GM10248 (cell line): ENCODE measurements at regions of chr17 and their contacts with region 1.

Region 1: DNA sequence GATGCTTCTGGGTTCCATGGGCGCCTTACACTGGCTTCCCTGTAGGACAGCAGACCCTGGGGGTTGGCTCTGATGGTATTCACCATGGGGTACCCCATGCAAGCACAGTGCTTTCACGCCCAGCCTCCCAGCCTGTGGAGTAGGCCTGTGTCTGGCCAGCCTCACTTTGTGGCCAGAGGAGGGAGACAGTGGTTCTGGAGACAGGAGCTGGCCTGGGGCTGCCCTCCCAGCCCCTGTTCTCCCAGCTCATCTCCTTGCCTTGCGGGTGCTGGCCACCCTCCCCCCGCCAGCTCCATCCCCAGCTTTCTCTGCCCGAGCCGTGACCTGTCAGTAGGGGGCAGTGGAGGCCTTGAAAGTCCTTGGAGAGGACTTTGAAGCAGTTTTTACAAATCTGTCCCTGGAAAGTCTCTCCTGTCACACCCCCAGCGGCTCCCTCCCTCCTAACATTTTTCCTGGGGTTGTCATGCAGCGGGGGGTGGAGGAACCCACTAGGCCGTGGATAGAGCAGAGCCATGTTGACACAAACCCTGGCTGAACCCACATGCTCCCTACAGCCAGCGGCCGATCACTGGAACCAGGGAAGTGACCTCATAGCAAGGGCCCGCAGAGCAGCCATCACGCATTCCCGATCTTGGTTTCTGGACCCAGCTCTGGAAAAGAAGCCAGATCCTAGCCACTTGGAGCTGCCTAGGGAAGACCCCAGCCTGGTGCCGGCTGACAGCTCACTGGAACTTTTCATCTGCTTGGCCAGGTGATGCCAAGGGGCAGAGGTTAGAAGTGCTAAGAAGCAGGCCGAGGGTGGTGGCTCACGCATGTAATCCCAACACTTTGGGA is 289.4 kb downstream of the SEC14L1 start:
- DNase-seq: peak; percentile 80
- CTCF ChIP-seq: peak; percentile 91

Region 2: GRCh38 chr17:77404812-77405581 is 25.1 kb before region 1 on chr17:
- CTCF ChIA-PET with region 1: interaction called, 37 read pairs
- POLR2A ChIA-PET with region 1: interaction called, 3 read pairs
- DNase-seq: peak; percentile 92
- CTCF ChIP-seq: no peak

Region 3: GRCh38 chr17:77444984-77445759 is 15.0 kb after region 1 on chr17:
- CTCF ChIA-PET with region 1: interaction called, 175 read pairs
- POLR2A ChIA-PET with region 1: interaction called, 4 read pairs
- DNase-seq: peak; percentile 75
- CTCF ChIP-seq: no peak

Region 4: DNA sequence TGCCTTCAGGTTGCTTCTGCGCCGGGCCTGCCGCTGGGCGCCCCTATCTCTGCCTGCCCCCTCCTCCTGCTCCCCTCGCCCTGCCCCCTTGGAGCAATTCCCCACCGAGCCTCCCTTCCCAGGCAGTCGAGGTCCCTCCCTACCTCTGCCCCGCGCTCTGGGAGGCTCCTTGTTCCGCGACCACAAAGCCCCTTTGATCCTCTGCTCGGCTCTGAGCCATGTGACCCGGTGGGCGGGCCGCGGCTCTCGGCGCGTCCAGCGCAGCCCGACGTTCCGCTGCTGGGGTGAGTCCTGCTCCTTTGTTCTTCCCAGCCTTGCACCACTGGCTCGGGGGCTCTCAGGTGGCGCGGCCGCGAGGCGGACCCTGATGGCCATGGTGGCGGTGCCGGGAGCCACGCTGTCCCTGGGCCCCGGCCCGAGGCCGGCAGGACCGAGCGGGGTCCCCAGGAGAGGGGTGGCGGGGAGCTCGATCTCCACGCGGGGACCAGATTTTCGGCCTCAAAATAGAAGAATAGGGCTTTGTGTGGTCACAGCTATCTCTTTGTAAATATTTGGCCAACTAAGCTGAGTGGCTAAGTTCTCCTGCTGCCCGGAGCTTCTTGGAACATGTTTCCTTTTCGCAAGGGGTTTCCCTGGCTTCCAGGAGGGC is 21.2 kb after region 1 on chr17:
- CTCF ChIA-PET with region 1: interaction called, 175 read pairs
- POLR2A ChIA-PET with region 1: no interaction called
- DNase-seq: peak; percentile 73
- CTCF ChIP-seq: no peak

Region 5: DNA sequence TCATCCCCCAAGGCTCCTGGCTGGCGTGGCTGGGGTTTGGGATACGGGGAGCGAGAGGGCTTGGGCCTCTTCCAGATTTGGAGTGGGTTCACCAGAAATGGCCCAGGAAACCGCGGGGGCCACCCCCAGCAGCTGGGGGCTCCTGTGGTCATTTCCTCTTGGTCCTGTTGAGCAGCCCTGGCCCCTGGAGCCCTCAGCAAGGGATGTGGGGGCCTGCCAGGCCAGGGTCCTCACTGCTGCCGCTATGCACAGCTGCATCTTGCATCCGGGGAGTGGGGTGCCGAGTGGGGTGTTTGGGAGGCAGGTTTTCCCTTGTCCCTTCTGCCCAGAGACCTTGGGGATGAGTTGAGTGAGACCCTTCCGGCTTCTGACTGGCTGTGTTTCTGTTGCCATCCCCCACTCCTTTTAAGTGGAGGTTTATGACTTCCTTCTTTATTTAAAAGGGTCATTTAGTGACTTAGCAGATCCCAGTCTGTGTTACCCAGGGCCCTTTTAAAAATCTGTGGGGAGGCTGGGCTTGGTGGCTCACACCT is 30.4 kb after region 1 on chr17:
- CTCF ChIA-PET with region 1: interaction called, 12 read pairs
- POLR2A ChIA-PET with region 1: no interaction called
- DNase-seq: no peak
- CTCF ChIP-seq: no peak

Region 6: GRCh38 chr17:77471984-77472461 is 41.9 kb after region 1 on chr17:
- CTCF ChIA-PET with region 1: interaction called, 37 read pairs
- POLR2A ChIA-PET with region 1: interaction called, 5 read pairs
- DNase-seq: no peak
- CTCF ChIP-seq: no peak

Region 7: GRCh38 chr17:77602062-77602746 is 172.1 kb after region 1 on chr17:
- CTCF ChIA-PET with region 1: no interaction called
- POLR2A ChIA-PET with region 1: no interaction called
- DNase-seq: no peak
- CTCF ChIP-seq: no peak